A549 (cell line): ENCODE measurements at regions of chr9 and their contacts with region 1.

Region 1: DNA sequence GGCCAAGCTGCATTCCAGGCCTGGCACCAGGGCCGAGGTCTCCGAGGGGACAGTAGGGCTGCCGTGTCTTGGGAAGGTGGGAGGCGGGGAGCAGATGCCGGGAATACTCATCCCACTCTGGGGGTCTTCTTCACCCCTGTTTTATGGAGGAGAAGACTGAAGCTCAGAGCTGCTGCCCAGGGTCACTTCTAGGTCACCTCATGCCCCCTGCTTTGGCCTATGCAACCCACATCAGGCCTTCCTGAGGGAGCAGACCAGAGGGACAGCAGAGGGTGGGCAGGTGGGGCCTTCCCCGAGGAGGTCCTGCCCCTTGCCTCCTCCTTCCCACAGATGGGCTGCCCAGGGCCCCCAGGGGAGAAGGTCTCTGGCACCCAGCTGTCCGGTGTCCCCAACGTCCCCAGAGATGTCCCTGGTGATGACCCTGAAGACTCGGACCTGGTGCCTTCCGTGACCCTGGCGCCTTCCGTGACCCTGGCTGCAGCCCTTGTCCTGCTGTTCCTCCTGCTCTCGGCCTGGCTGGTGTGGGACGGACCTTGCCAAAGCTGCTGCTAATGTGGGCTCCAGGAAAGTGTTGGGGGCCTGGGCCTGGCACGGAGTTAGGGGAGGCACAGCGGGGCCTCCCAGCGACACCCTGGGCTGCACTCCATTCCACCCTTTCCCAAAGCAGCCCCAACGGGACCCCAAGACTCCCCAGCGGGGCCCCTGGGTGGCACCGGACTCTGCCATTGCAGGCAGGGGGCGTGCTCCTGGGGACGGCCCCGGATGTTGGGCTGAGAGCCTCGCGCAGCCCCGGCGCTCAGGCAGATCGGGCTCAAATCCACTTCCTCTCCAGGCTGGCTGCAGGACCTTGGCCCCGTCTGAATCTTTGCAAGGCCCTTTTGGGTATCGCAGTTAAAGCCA is 6.7 kb upstream of the SLC2A6 start:
- DNase-seq: peak in 1 of 2 experiments; percentile 37
- ATAC-seq: peak; percentile 53 to 73; a peak in 4 of 6 replicates
- H3K4me3 ChIP-seq: no peak overlapping the region
- H3K27ac ChIP-seq: 0 out of 6 replicates have a peak overlapping the region, but pooled peaks of 1 of the 2 experiments have one; percentile 38
- H3K4me1 ChIP-seq: 0 out of 3 replicates have a peak, but pooled peaks cover 3% of the 10 kb centered on the region
- CTCF ChIP-seq: no peak
- EP300 ChIP-seq: no peak
- POLR2A ChIP-seq: no peak
- RAD21 ChIP-seq: no peak

Region 2: DNA sequence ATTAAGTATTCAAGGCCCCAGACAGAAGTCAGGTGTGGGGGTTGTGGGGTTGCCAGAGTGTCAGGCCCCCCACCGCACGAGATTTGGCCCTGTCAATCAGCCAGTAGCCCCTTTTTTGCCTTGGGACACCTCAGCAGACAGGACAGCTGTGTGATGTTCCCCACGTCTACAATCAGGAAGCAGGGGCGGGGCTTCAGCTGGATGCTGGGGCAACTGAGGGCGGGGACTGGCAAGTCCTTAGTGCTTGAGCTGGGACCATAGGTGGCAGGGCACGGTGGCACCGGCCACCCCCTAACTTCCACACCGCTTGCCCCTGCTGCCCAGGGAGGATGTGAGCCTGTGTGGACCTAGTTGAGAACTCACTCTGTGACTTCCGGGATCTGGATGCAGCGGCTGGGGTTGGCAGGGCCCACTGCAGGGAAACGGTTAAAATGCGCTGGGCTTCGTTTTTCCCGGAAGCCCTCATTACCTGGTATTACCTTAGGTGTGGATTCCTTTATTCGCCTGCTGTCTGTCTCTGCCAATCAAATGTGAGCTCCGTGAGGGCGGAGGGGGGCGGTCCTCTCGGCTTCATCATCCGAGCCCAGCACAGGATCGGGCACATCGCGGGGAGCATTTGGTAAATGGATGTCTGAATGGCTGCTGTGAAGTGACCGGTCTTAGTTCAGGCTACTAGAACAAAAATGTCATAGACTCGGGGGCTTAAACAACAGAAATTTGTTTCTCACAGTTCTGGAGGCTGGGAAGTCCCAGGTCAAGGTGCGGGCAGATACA is 462.3 kb before region 1 on chr9:
- CTCF ChIA-PET with region 1: interaction called, 13 read pairs
- POLR2A ChIA-PET with region 1: no interaction called
- DNase-seq: peak in 1 of 2 experiments; percentile 22
- ATAC-seq: peak in 1 of 2 experiments; percentile 30; a peak in 3 of 6 replicates
- H3K4me3 ChIP-seq: no peak overlapping the region
- H3K27ac ChIP-seq: no peak overlapping the region
- H3K4me1 ChIP-seq: no peaks in the 10 kb centered on the region
- CTCF ChIP-seq: no peak
- EP300 ChIP-seq: no peak
- POLR2A ChIP-seq: no peak
- RAD21 ChIP-seq: no peak

Region 3: GRCh38 chr9:133294257-133294656 is 191.4 kb before region 1 on chr9:
- CTCF ChIA-PET with region 1: no interaction called
- POLR2A ChIA-PET with region 1: no interaction called
- DNase-seq: no peak
- ATAC-seq: no peak
- H3K4me3 ChIP-seq: no peak overlapping the region
- H3K27ac ChIP-seq: no peak overlapping the region
- H3K4me1 ChIP-seq: no peaks in the 10 kb centered on the region
- CTCF ChIP-seq: no peak
- EP300 ChIP-seq: no peak
- POLR2A ChIP-seq: no peak
- RAD21 ChIP-seq: no peak

Region 4: DNA sequence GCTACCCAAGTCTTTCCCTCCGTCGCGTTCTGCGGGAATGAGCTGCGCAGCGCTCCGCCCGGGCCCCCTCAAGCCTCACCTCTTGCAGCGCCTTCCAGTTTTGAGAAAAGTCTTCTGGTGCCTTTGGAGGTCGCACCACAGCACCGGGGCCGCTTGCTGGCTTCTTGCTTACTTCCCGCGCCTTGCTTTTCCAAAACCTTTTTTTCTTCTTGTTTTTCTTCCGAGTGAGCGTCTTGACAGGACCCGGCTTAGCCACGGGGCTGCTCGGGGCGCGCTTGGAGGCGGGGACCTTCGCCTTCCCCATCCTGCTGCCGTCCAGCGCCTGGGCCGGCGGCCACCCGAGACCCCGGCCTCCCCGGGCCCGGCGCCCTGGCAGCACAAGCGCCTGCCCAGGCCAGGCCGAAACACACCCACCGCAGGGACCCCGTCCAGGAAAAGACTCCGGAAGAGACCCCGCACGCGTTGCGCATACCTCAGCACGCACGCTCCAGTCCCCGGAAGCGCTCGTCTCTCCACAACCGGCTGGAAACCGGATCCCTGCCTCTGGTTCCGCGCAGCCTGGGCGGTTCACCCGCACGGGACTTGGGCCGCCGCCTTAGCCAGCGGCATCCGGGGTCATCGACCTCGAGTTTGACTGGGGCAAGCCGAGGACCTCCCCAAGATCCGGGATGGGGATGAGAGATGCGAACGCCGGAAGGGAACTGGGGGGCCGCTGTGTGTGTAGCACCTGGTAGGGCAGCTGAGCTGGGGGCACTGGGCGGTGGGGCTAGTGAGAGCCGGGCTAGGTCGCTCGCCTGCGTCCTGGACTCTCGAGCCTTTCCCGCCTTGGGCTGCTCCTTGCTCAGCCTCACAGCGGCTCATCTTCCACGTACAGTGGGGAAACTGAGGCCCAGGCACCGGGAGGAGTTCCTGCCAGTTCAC is 67.8 kb before region 1 on chr9 and contains the start of gene REXO4:
- CTCF ChIA-PET with region 1: interaction called, 10 read pairs
- POLR2A ChIA-PET with region 1: no interaction called
- DNase-seq: peak; percentile 73 to 89
- ATAC-seq: peak; percentile 89 to 96
- H3K4me3 ChIP-seq: peak within 1 kb of the TSS; percentile 98
- H3K27ac ChIP-seq: peak within 1 kb of the TSS; percentile 92 to 93
- H3K4me1 ChIP-seq: peaks cover 14% of the 10 kb centered on the region; the same call in 1 of the 3 replicates
- CTCF ChIP-seq: no peak
- EP300 ChIP-seq: no peak
- POLR2A ChIP-seq: peak; percentile 40; the same call in 1 of the 2 replicates
- RAD21 ChIP-seq: no peak
- polyA plus RNA-seq, gene REXO4: 20.6 and 25.8 TPM in 2 replicates

Region 5: GRCh38 chr9:133459476-133460404 is 25.9 kb before region 1 on chr9 and contains the start of gene CACFD1:
- CTCF ChIA-PET with region 1: interaction called, 58 read pairs
- POLR2A ChIA-PET with region 1: interaction called, 3 read pairs
- DNase-seq: peak; percentile 95 to 97
- ATAC-seq: peak; percentile 82 to 91
- H3K4me3 ChIP-seq: peak within 1 kb of the TSS; percentile 78
- H3K27ac ChIP-seq: peak within 1 kb of the TSS; percentile 97 to 98
- H3K4me1 ChIP-seq: peaks cover 16% of the 10 kb centered on the region
- CTCF ChIP-seq: no peak
- EP300 ChIP-seq: no peak
- POLR2A ChIP-seq: peak; percentile 62
- RAD21 ChIP-seq: no peak
- polyA plus RNA-seq, gene CACFD1: 6.2 and 8.0 TPM in 2 replicates

Region 6: GRCh38 chr9:133506653-133507038 is 21.0 kb after region 1 on chr9:
- CTCF ChIA-PET with region 1: interaction called, 11 read pairs
- POLR2A ChIA-PET with region 1: no interaction called
- DNase-seq: peak in 1 of 2 experiments; percentile 31
- ATAC-seq: peak in 1 of 2 experiments; percentile 47; a peak in 3 of 6 replicates
- H3K4me3 ChIP-seq: no peak overlapping the region
- H3K27ac ChIP-seq: no peak overlapping the region
- H3K4me1 ChIP-seq: peaks cover 13% of the 10 kb centered on the region
- CTCF ChIP-seq: no peak
- EP300 ChIP-seq: no peak
- POLR2A ChIP-seq: no peak
- RAD21 ChIP-seq: no peak